ENCODE measurements at regions of chr6 and their contacts with region 1.

Region 1: GRCh38 chr6:138987640-138988468 is at the start of gene REPS1:
- DNase-seq: peak; percentile 96
- ATAC-seq: peak; percentile 90
- H3K4me3 Mint-ChIP-seq: peak within 1 kb of the TSS; percentile 84
- H3K27ac Mint-ChIP-seq: peak within 1 kb of the TSS; percentile 57
- H3K4me1 Mint-ChIP-seq: peaks cover 12% of the 10 kb centered on the region
- H3K27me3 Mint-ChIP-seq: no peaks in the 10 kb centered on the region
- CTCF ChIP-seq: peak; percentile 98
- total RNA-seq, gene REPS1: 51.0 to 55.1 TPM (median 54.6 TPM) in 3 replicates

Region 2: GRCh38 chr6:139028658-139029469 is 41.0 kb after region 1 on chr6 and contains the start of gene ABRACL:
- CTCF ChIA-PET with region 1: interaction called, 8 read pairs
- POLR2A ChIA-PET with region 1: interaction called, 10 read pairs
- DNase-seq: peak; percentile 78
- ATAC-seq: peak; percentile 12
- H3K4me3 Mint-ChIP-seq: peak within 1 kb of the TSS; percentile 85
- H3K27ac Mint-ChIP-seq: peak within 1 kb of the TSS; percentile 94
- H3K4me1 Mint-ChIP-seq: peaks cover 32% of the 10 kb centered on the region
- H3K27me3 Mint-ChIP-seq: no peaks in the 10 kb centered on the region
- CTCF ChIP-seq: no peak
- total RNA-seq, gene ABRACL: 111 to 117 TPM (median 116 TPM) in 3 replicates